Heart right ventricle (tissue), 16 donors: ENCODE measurements at regions of chr2 and their contacts with region 1.

Region 1: DNA sequence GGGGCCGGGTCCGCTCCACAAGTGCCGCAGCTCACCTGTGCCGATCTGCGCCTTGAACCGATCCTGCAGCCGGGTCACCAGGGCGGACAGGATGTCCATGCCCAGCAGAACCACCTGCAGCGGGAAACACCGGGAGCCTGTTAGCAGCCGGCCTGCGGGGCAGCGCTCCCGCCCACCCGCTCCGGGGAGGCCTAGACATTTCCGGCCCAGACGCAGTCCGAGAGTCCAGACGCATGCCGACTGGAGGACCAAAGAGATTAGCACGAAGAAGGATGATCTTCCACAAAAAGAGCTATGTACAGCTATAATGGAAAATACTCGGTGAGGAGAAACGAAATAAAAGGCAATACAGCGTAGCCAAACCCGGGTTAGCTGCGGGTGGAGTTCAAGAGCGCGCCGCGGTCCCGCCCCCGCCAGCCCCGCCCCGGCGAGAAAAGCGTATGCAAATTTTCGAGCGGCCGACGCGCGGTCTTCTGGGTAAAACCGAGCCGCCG is 421 bp upstream of the RNU4ATAC start:
- DNase-seq: peak; percentile 82 to 83
- ATAC-seq: peak; percentile 83 to 92 (median 86)
- H3K4me3 ChIP-seq: peak overlapping the region; percentile 61 to 84 (median 73)
- H3K27ac ChIP-seq: peak overlapping the region; percentile 95 to 99 (median 96)
- H3K4me1 ChIP-seq: peaks cover 4 to 86% (median 61%) of the 10 kb centered on the region in 9 donors
- H3K27me3 ChIP-seq: no peaks in the 10 kb centered on the region
- CTCF ChIP-seq: no peak

Region 2: DNA sequence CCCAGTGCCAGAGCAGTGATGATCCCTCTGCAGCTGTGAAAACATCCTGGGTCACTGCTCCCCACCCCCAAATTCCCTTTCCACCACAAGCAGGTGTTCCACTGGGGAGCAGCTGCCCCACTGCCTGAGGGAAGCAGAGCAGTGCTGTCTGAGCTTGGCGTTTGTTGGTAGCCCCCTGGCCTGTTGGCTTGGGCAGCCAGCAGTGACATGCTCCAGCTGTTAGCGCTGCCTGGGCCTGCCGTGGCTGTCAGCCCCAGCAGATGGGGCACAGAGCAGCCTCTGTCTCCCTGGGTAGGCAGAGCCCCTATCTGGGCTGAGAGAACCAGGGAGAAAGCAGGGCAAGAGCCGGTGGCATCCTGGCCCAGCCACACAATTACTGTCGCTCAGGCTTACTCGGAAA is 546.9 kb before region 1 on chr2:
- intact Hi-C with region 1: no loop called
- DNase-seq: no peak
- ATAC-seq: peak in 1 of 8 donors; percentile 33
- H3K4me3 ChIP-seq: no peak overlapping the region
- H3K27ac ChIP-seq: no peak overlapping the region
- H3K4me1 ChIP-seq: no peaks in the 10 kb centered on the region
- H3K27me3 ChIP-seq: no peaks in the 10 kb centered on the region
- CTCF ChIP-seq: no peak

Region 3: DNA sequence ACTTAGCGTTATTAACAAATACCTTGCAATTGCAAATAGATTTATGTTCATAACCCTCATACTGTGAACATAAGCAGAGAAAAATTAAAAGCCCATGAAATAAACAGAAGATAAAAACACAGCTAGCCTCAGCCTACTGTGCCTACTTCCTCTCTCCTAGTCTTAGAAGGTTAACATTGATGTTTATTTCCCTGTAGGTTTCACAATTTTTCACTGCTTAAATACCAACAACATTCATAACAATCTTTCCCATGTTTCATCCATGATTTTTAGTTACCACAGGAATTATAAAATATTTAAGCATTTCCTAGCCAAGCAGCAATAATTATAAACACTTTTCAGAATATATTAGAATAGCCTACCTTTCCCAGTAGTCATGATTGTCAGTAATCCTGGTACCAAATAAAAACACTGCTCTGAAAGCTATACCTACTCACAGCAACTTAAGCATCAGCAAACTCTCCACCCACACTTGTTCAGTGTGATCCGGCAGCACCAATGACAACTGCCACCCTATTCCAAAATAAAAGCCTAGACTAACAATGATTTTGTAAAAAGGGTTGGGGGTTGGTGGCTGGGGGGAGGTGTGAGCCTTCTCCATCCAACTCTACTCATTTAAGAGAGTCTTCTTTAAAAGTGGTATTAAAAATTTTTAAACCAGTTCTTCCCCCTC is 40.2 kb before region 1 on chr2:
- intact Hi-C with region 1: loop called in 1 of 10 experiments (anchors 5 kb)
- DNase-seq: no peak
- ATAC-seq: peak in 1 of 8 donors; percentile 54
- H3K4me3 ChIP-seq: no peak overlapping the region
- H3K27ac ChIP-seq: no peak overlapping the region
- H3K4me1 ChIP-seq: peaks cover 3 to 84% (median 33%) of the 10 kb centered on the region in 9 donors
- H3K27me3 ChIP-seq: no peaks in the 10 kb centered on the region
- CTCF ChIP-seq: no peak

Region 4: GRCh38 chr2:121634354-121635307 is 104.4 kb after region 1 on chr2:
- intact Hi-C with region 1: no loop called
- DNase-seq: no peak
- ATAC-seq: no peak
- H3K4me3 ChIP-seq: no peak overlapping the region
- H3K27ac ChIP-seq: peak overlapping the region in 8 of 10 donors; percentile 10 to 71 (median 56)
- H3K4me1 ChIP-seq: peaks cover 3 to 48% (median 40%) of the 10 kb centered on the region in 9 donors
- H3K27me3 ChIP-seq: no peaks in the 10 kb centered on the region
- CTCF ChIP-seq: no peak

Region 5: DNA sequence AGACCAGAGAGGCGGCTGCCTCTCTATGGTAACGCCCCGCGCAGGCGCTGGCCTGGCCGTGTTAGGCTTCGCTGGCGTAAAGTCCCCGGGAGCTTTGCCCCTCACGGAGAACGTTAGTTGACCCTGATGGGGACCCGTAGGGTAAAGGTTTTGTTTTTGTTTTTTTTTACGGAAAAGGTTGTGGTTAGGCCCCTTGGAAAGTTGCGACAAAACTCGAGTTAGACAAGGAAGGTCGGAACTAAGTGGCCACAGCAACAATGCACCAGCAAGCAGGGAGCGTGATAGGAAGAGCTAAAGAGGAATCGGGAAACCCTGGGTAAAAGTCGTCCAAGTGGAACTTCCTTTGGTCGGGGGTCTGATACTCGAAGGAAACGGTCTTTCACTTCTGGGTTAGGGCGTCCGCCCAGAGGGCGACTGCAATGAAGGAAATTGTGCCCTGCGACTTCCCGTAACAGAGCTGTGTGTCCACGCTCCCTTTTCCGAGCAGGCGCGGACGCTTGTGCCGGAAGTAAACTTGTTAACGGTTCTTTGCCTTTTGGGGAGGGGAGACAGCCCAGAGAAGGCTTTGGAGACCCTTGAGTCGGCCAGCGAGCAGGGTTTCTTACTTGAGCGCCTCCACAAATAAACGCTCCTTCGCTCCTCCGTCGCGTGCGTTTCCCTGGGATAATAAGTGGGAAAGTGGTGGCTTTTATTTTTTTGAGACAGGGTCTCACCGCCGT is 119.5 kb after region 1 on chr2:
- intact Hi-C with region 1: loop called (anchors 1 to 10 kb)
- DNase-seq: peak; percentile 95 to 97
- ATAC-seq: peak; percentile 98 to 99 (median 98)
- H3K4me3 ChIP-seq: peak overlapping the region; percentile 62 to 96 (median 90)
- H3K27ac ChIP-seq: peak overlapping the region; percentile 86 to 100 (median 96)
- H3K4me1 ChIP-seq: peaks cover 8 to 68% (median 55%) of the 10 kb centered on the region in 9 donors
- H3K27me3 ChIP-seq: no peaks in the 10 kb centered on the region
- CTCF ChIP-seq: no peak

Region 6: GRCh38 chr2:121722479-121722878 is 192.2 kb after region 1 on chr2:
- intact Hi-C with region 1: loop called in 9 of 10 experiments (anchors 1 to 10 kb)
- DNase-seq: no peak
- ATAC-seq: peak in 5 of 8 donors; percentile 47 to 85 (median 72)
- H3K4me3 ChIP-seq: no peak overlapping the region
- H3K27ac ChIP-seq: no peak overlapping the region
- H3K4me1 ChIP-seq: peaks cover 0 to 20% (median 0%) of the 10 kb centered on the region in 9 donors
- H3K27me3 ChIP-seq: no peaks in the 10 kb centered on the region
- CTCF ChIP-seq: no peak